Mammary epithelial cell (primary cell): ENCODE measurements at regions of chr9 and their contacts with region 1.

Region 1: GRCh38 chr9:37262410-37262809 is 142.0 kb downstream of the ZCCHC7 start:
- DNase-seq: peak; percentile 2
- H3K4me3 ChIP-seq: no peak overlapping the region
- H3K27ac ChIP-seq: no peak overlapping the region
- H3K4me1 ChIP-seq: no peaks in the 10 kb centered on the region
- H3K27me3 ChIP-seq: no peaks in the 10 kb centered on the region
- CTCF ChIP-seq: peak; percentile 28 to 52

Region 2: DNA sequence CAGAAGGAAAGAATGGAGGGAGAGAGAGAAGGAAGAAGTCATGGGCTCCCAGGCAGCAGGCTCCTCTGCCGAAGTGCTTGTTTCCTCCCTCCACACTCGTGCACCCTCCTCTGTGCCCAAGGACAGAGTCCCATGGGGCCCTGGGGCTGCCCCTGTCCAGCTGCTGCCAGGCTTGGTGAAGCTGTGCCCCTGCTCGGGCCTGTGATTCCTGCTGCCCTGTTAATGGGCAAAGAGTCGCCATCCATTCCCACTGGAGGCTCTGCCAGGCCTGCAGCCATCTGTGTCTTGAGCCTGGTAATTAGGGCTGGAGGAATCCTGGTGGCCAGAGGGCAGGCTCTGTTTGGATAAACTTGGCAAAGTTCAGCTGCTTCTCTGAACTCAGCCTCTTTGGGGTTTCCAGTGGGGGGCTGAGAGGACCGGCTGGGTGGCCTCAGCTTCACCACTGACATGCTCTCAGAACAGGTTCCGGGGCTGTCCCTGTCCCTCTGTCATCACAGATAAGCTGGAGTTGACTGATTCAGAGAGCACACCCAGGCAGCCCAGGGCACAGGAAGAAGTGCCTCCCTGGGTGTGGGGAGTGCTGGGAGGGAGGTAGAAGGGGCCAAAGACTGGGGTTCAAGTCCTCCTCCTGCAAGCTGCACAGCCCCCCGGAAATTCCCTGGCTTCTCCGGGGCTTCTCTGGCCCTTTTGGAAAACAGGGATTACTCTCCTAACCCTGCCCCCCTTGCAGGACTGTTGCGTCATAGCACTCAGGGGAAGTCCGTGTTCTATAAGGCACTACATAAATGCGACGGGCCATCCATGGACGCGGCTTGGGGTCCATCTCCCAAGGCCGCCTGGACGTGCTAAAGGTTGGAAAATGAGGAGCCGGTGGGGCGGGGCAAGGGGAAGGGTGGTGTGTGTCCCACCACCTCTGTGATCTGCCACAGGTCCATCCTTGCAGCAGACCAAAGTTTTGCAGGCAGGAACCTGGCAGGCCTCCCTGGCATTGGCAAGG is 383.1 kb before region 1 on chr9:
- CTCF ChIA-PET with region 1: no interaction called
- dilution Hi-C with region 1: no loop called
- in situ Hi-C with region 1: loop called in 1 of 2 experiments (anchors 25 kb)
- intact Hi-C with region 1: no loop called
- DNase-seq: no peak
- H3K4me3 ChIP-seq: no peak overlapping the region
- H3K27ac ChIP-seq: no peak overlapping the region
- H3K4me1 ChIP-seq: no peaks in the 10 kb centered on the region
- H3K27me3 ChIP-seq: no peaks in the 10 kb centered on the region
- CTCF ChIP-seq: no peak

Region 3: GRCh38 chr9:36995927-36996705 is 266.3 kb before region 1 on chr9:
- CTCF ChIA-PET with region 1: no interaction called
- dilution Hi-C with region 1: no loop called
- in situ Hi-C with region 1: no loop called
- intact Hi-C with region 1: loop called (anchors 1 kb)
- DNase-seq: peak; percentile 20
- H3K4me3 ChIP-seq: no peak overlapping the region
- H3K27ac ChIP-seq: no peak overlapping the region
- H3K4me1 ChIP-seq: no peaks in the 10 kb centered on the region
- H3K27me3 ChIP-seq: no peaks in the 10 kb centered on the region
- CTCF ChIP-seq: peak; percentile 35 to 59

Region 4: GRCh38 chr9:37229882-37230487 is 32.4 kb before region 1 on chr9:
- CTCF ChIA-PET with region 1: no interaction called
- dilution Hi-C with region 1: no loop called
- in situ Hi-C with region 1: loop called in 1 of 2 experiments (anchors 5 kb)
- intact Hi-C with region 1: no loop called
- DNase-seq: no peak
- H3K4me3 ChIP-seq: no peak overlapping the region
- H3K27ac ChIP-seq: no peak overlapping the region
- H3K4me1 ChIP-seq: no peaks in the 10 kb centered on the region
- H3K27me3 ChIP-seq: no peaks in the 10 kb centered on the region
- CTCF ChIP-seq: no peak

Region 5: GRCh38 chr9:37243588-37244345 is 18.6 kb before region 1 on chr9:
- CTCF ChIA-PET with region 1: no interaction called
- dilution Hi-C with region 1: no loop called
- in situ Hi-C with region 1: no loop called
- intact Hi-C with region 1: no loop called
- DNase-seq: no peak
- H3K4me3 ChIP-seq: no peak overlapping the region
- H3K27ac ChIP-seq: no peak overlapping the region
- H3K4me1 ChIP-seq: no peaks in the 10 kb centered on the region
- H3K27me3 ChIP-seq: no peaks in the 10 kb centered on the region
- CTCF ChIP-seq: no peak